Esophagus squamous epithelium (tissue), 5 donors: ENCODE measurements at regions of chr7 and their contacts with region 1.

Region 1: GRCh38 chr7:90629297-90629918 is 33.3 kb downstream of the CDK14 start:
- DNase-seq: no peak
- H3K4me3 ChIP-seq: no peak overlapping the region
- H3K27ac ChIP-seq: no peak overlapping the region
- H3K4me1 ChIP-seq: peaks cover 0 to 7% (median 0%) of the 10 kb centered on the region in 3 donors
- H3K27me3 ChIP-seq: no peaks in the 10 kb centered on the region
- CTCF ChIP-seq: peak in 5 of 6 experiments; percentile 24 to 62 (median 42)
- POLR2A ChIP-seq: no peak

Region 2: DNA sequence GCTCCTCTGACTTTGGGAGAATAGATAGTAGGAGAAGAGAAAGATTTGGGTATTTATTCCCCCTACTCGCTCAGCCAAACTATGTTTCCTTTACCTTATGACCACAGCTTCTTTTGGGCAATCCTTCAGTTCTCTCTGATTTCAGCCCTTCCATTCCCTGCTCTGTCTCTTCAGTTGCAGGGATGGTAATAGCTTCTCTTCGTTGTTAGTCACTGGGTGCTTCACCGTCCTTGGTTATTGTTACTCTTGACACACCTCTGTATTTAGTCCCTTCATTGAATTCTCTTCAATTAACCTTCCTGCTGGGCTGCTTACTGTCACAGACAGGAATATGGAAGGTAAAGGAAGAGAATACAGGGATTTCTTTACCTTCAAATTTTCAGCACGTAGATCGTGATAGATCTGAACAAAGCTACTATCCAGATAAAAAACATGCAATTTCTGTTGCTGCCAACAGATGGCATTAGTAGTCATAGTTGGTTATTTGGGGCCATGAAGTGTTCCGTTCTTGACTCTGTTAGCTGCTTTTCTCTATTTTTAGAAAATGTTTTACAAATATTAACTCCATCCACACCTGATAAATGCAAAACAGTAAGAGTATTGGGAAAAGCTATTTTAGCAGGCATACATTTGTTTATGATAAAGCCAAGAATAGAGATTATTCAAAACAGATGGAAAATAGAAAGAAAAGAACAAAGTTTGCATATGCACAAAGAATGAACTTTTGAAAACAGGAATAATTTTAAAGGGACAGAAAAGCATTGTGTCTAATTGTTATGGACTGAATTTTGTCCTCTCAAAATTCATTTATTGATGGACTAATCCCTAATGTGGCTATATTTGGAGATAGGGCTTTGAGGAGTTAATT is 174.0 kb before region 1 on chr7:
- intact Hi-C with region 1: loop called (anchors 10 kb)
- DNase-seq: no peak
- H3K4me3 ChIP-seq: peak overlapping the region in 1 of 4 donors; percentile 44
- H3K27ac ChIP-seq: no peak overlapping the region
- H3K4me1 ChIP-seq: no peaks in the 10 kb centered on the region
- H3K27me3 ChIP-seq: no peaks in the 10 kb centered on the region
- CTCF ChIP-seq: peak in 5 of 6 experiments; percentile 43 to 65 (median 52)
- POLR2A ChIP-seq: no peak